Heart left ventricle (tissue), 16 donors: ENCODE measurements at regions of chrX and their contacts with region 1.

Region 1: GRCh38 chrX:103533511-103534216 is 14.4 kb upstream of the RAB40A start:
- DNase-seq: peak; percentile 45 to 73 (median 64)
- ATAC-seq: peak; percentile 55 to 73 (median 66)
- H3K4me3 ChIP-seq: peak overlapping the region in 10 of 12 donors; percentile 32 to 60 (median 46)
- H3K27ac ChIP-seq: no peak overlapping the region
- H3K4me1 ChIP-seq: peaks cover 0 to 5% (median 0%) of the 10 kb centered on the region in 12 donors
- H3K27me3 ChIP-seq: peaks cover 0 to 14% (median 0%) of the 10 kb centered on the region in 9 donors
- CTCF ChIP-seq: peak; percentile 55 to 84 (median 72)
- POLR2A ChIP-seq: no peak

Region 2: GRCh38 chrX:103629318-103630170 is 95.9 kb after region 1 on chrX:
- intact Hi-C with region 1: loop called in 8 of 10 experiments (anchors 2 to 10 kb)
- DNase-seq: peak; percentile 66 to 77 (median 72)
- ATAC-seq: peak; percentile 90 to 94 (median 93)
- H3K4me3 ChIP-seq: peak overlapping the region; percentile 39 to 94 (median 72)
- H3K27ac ChIP-seq: peak overlapping the region; percentile 70 to 97 (median 93)
- H3K4me1 ChIP-seq: peaks cover 0 to 23% (median 4%) of the 10 kb centered on the region in 12 donors
- H3K27me3 ChIP-seq: peaks cover 0 to 15% (median 0%) of the 10 kb centered on the region in 9 donors
- CTCF ChIP-seq: peak in 10 of 12 donors; percentile 12 to 66 (median 46)
- POLR2A ChIP-seq: no peak

Region 3: GRCh38 chrX:103674531-103675454 is 141.1 kb after region 1 on chrX:
- intact Hi-C with region 1: no loop called
- DNase-seq: no peak
- ATAC-seq: peak in 2 of 4 donors; percentile 18 to 22
- H3K4me3 ChIP-seq: no peak overlapping the region
- H3K27ac ChIP-seq: no peak overlapping the region
- H3K4me1 ChIP-seq: no peaks in the 10 kb centered on the region
- H3K27me3 ChIP-seq: no peaks in the 10 kb centered on the region
- CTCF ChIP-seq: no peak
- POLR2A ChIP-seq: no peak

Region 4: DNA sequence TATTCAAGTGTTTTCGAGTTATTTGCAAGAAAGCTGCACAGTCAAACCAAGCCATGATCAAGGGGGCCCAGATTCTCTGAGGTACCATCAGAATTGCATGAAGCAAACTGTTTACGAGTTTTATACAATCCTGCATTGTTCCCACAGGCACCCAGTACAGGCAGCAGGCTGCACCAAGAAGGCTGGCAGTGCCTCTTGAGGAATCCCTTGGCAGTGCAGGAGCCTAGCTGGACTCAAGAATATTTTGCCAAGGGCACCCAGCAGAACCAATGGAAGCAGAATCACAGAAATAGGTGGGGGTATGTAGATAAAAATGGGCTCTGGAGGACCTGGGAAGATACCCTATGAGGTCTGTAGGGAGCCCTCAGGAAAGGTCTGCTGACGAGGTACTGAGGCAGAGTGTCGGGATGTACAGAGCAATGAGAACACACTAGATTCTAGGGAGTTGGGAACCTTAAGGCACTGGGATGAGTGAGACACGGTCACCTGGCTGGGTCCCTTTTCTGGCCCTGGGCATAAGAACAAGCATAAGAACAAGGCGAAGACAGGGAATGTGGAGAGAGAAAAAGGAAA is 240.5 kb after region 1 on chrX:
- intact Hi-C with region 1: loop called in 2 of 10 experiments (anchors 5 kb)
- DNase-seq: no peak
- ATAC-seq: peak; percentile 45 to 65 (median 55)
- H3K4me3 ChIP-seq: no peak overlapping the region
- H3K27ac ChIP-seq: no peak overlapping the region
- H3K4me1 ChIP-seq: peaks cover 0 to 1% (median 0%) of the 10 kb centered on the region in 12 donors
- H3K27me3 ChIP-seq: peaks cover 0 to 19% (median 0%) of the 10 kb centered on the region in 9 donors
- CTCF ChIP-seq: peak in 9 of 12 donors; percentile 16 to 49 (median 37)
- POLR2A ChIP-seq: no peak

Region 5: DNA sequence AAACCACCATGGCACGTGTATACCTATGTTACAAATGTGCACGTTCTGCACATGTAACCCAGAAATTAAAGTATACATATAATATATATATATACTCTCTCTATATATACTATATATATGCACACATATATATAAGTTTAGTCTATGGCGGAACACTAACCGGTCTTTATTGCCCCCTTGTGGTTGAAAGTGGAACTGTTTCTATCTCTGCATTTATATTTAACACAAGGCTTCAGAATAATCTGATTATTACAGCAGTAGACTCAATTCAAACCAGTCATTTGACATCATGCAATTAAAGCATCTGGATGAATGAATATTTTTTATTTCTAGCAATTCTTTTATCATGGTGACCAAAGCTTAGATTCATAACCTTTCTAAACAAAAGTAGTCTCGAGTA is 283.8 kb after region 1 on chrX:
- intact Hi-C with region 1: loop called in 9 of 10 experiments (anchors 5 to 10 kb)
- DNase-seq: no peak
- ATAC-seq: no peak
- H3K4me3 ChIP-seq: no peak overlapping the region
- H3K27ac ChIP-seq: no peak overlapping the region
- H3K4me1 ChIP-seq: no peaks in the 10 kb centered on the region
- H3K27me3 ChIP-seq: peaks cover 0 to 9% (median 0%) of the 10 kb centered on the region in 9 donors
- CTCF ChIP-seq: peak; percentile 48 to 91 (median 72)
- POLR2A ChIP-seq: no peak

Region 6: GRCh38 chrX:104136241-104137019 is 602.8 kb after region 1 on chrX:
- intact Hi-C with region 1: loop called in 1 of 10 experiments (anchors 10 kb)
- DNase-seq: peak in 4 of 5 donors; percentile 61 to 67 (median 64)
- ATAC-seq: peak; percentile 83 to 91 (median 88)
- H3K4me3 ChIP-seq: peak overlapping the region in 10 of 12 donors; percentile 10 to 59 (median 45)
- H3K27ac ChIP-seq: peak overlapping the region in 3 of 12 donors; percentile 30 to 53 (median 46)
- H3K4me1 ChIP-seq: peaks cover 0 to 11% (median 2%) of the 10 kb centered on the region in 12 donors
- H3K27me3 ChIP-seq: peaks cover 0 to 5% (median 0%) of the 10 kb centered on the region in 9 donors
- CTCF ChIP-seq: peak; percentile 52 to 86 (median 70)
- POLR2A ChIP-seq: no peak